ENCODE measurements at regions of chr5 and their contacts with region 1.

Region 1: DNA sequence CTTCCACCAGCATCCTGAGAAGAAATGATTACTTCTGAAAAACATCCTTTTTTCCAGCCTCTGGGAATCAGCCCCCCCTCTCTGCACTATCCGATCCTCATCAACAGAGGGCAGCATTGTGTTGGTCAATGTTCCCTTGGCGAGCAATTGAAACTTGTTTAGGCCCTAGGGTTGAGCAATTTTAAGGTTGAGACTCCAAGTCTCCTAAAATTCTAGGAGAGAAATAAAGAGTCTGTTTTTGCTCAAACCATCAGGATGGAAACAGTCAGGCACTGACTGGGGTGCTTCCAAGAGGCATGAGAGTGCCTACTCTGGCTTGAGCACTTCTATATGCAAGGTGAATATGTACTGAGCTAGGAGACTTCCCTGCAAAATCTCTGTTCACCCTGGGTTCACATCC is 12.4 kb upstream of the CYFIP2 start:
- DNase-seq: no peak
- H3K4me3 ChIP-seq: no peak overlapping the region
- H3K27ac ChIP-seq: no peak overlapping the region
- H3K4me1 ChIP-seq: peaks cover 0 to 4% (median 0%) of the 10 kb centered on the region in 4 donors
- H3K27me3 ChIP-seq: no peaks in the 10 kb centered on the region
- CTCF ChIP-seq: peak; percentile 40 to 79 (median 69)
- EP300 ChIP-seq: no peak
- POLR2A ChIP-seq: no peak

Region 2: GRCh38 chr5:157038568-157039187 is 214.9 kb before region 1 on chr5:
- intact Hi-C with region 1: no loop called
- DNase-seq: no peak
- H3K4me3 ChIP-seq: no peak overlapping the region
- H3K27ac ChIP-seq: no peak overlapping the region
- H3K4me1 ChIP-seq: no peaks in the 10 kb centered on the region
- H3K27me3 ChIP-seq: no peaks in the 10 kb centered on the region
- CTCF ChIP-seq: no peak
- EP300 ChIP-seq: no peak
- POLR2A ChIP-seq: no peak

Region 3: DNA sequence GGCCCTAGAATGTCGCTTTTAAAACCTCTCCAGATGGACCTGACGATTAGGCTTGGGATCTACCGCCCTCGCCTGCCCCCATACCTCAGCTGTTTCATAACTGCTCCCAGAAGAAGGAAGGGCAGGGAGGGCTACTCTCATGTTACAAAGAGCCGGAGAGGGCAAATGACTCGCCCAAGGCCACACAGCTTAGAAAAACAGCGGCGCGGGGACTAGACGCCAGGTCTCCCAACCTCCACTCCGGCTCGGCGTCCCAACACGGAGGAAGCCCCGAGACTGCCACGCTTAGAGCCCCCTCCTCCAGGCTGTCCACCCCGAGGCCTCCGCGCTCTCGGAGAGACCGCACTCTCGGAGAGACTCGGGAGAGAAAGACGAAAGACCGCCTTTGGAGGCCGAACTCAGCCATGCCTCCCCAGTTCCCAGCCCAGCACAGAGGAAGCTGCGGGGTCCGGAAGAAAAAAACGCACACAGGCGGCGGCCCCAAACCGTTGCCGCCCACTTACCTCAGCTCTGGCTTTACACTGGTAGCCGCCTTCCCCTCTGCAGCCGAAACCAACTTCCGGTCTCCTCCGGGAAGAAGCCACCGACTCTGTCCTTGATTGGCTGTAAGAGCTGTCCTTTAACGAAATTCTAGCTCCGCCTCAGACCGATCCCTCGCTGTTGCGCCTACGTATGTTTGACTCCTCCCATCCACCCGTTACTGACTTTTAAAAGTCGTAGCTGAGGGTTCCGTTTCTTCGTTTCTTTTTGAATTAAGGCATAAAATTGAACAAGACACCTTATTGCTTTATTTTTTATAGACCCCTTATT is 111.0 kb before region 1 on chr5 and contains the start of gene MED7:
- intact Hi-C with region 1: loop called (anchors 5 kb)
- DNase-seq: peak; percentile 98
- H3K4me3 ChIP-seq: peak within 1 kb of the TSS; percentile 86 to 92 (median 88)
- H3K27ac ChIP-seq: peak within 1 kb of the TSS; percentile 90 to 94 (median 90)
- H3K4me1 ChIP-seq: peaks cover 0 to 24% (median 14%) of the 10 kb centered on the region in 4 donors
- H3K27me3 ChIP-seq: no peaks in the 10 kb centered on the region
- CTCF ChIP-seq: no peak
- EP300 ChIP-seq: no peak
- POLR2A ChIP-seq: peak; percentile 53 to 85
- total RNA-seq, gene MED7: 9.7 to 15.1 (median 10.6) TPM

Region 4: GRCh38 chr5:157241483-157241882 is 12.1 kb before region 1 on chr5:
- intact Hi-C with region 1: no loop called
- DNase-seq: no peak
- H3K4me3 ChIP-seq: no peak overlapping the region
- H3K27ac ChIP-seq: no peak overlapping the region
- H3K4me1 ChIP-seq: no peaks in the 10 kb centered on the region
- H3K27me3 ChIP-seq: no peaks in the 10 kb centered on the region
- CTCF ChIP-seq: no peak
- EP300 ChIP-seq: no peak
- POLR2A ChIP-seq: no peak

Region 5: GRCh38 chr5:157312492-157312891 is 58.9 kb after region 1 on chr5:
- intact Hi-C with region 1: loop called (anchors 1 kb)
- DNase-seq: no peak
- H3K4me3 ChIP-seq: no peak overlapping the region
- H3K27ac ChIP-seq: no peak overlapping the region
- H3K4me1 ChIP-seq: no peaks in the 10 kb centered on the region
- H3K27me3 ChIP-seq: no peaks in the 10 kb centered on the region
- CTCF ChIP-seq: peak in 3 of 4 experiments; percentile 48 to 68 (median 58)
- EP300 ChIP-seq: no peak
- POLR2A ChIP-seq: no peak

Measured in sigmoid colon (tissue), 7 donors.